H1 (cell line): ENCODE measurements at regions of chrX and their contacts with region 1.

Region 1: DNA sequence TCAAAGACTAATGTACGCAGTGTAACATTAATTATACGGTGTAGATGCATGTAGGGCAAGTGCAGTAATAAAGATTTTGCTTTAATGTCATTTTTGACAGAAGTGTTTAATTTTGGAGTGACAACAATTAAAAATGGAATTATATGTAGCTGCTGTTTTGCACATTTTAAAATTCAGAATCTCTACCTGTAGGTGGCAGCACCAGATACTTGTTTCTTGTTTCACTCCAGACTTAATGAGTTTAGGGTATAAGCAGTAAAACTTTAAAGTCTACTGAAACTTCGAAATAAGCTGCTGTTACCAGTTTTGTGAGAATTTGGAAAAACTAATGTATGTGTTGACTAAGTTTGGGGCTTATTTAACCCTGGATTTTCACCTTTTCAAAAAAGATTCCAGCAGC is 144.9 kb downstream of the POLA1 start:
- DNase-seq: no peak
- H3K4me3 ChIP-seq: no peak overlapping the region
- H3K27ac ChIP-seq: no peak overlapping the region
- H3K4me1 ChIP-seq: peaks cover 0 to 2% (median 0%) of the 10 kb centered on the region in 4 experiments; a peak in 1 of 7 replicates
- H3K27me3 ChIP-seq: no peaks in the 10 kb centered on the region
- CTCF ChIP-seq: peak in 1 of 3 experiments; percentile 25; a peak in 1 of 4 replicates
- EP300 ChIP-seq: no peak
- POLR2A ChIP-seq: no peak
- RAD21 ChIP-seq: peak; percentile 33 to 43

Region 2: DNA sequence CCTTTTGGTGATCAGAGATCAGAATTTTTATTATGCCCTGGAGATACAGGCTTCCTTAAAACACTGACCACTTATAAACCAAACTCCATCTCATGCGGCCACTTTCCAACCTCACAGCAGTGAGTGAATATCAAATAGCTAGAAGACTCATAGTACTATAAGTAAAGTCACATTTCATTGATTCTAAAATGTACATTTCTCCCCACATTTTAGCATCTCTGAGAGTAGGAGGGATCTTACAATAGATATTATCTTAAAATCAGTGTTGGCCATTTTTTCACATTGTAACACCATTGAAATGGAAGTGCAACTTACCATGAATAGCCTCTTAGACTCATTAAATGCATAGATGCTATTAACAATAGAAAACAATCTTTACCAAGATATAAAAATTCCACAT is 208.9 kb before region 1 on chrX:
- CTCF ChIA-PET with region 1: no interaction called
- POLR2A ChIA-PET with region 1: no interaction called
- DNase-seq: no peak
- H3K4me3 ChIP-seq: no peak overlapping the region
- H3K27ac ChIP-seq: no peak overlapping the region
- H3K4me1 ChIP-seq: no peaks in the 10 kb centered on the region
- H3K27me3 ChIP-seq: no peaks in the 10 kb centered on the region
- CTCF ChIP-seq: no peak
- EP300 ChIP-seq: no peak
- POLR2A ChIP-seq: no peak
- RAD21 ChIP-seq: no peak

Region 3: DNA sequence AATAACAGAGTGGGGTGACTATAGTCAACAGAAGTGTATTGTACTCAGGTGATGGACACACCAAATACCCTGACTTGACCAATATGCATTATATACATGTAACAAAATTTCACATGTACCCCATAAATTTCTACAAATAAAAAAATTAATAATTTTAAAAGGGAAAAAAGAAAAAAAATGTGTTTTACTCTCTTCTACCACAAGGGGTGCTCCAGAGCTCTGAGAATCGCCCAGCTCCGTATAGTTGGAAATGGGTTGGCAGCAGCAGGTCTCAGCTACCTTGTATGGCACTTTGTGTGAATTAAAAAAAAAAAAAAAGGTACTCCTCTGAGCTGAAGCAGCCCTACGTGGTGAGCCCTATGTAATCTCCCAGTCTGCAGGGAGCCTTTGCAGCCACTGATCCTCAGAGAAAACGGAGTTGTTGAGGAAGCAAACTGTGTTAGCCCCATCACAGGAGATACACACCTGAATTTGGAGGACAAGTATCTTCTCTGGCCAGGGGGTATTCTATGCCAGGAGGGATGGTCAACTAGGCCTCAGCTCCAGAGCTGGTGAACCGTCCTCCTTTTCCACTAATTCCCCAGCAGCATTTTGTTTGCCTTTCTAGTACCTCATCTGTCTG is 162.1 kb before region 1 on chrX:
- CTCF ChIA-PET with region 1: no interaction called
- POLR2A ChIA-PET with region 1: no interaction called
- DNase-seq: no peak
- H3K4me3 ChIP-seq: no peak overlapping the region
- H3K27ac ChIP-seq: no peak overlapping the region
- H3K4me1 ChIP-seq: peaks cover 0 to 10% (median 3%) of the 10 kb centered on the region in 4 experiments; a peak in 4 of 7 replicates
- H3K27me3 ChIP-seq: no peaks in the 10 kb centered on the region
- CTCF ChIP-seq: peak; percentile 8 to 15 (median 15); a peak in 3 of 4 replicates
- EP300 ChIP-seq: no peak
- POLR2A ChIP-seq: no peak
- RAD21 ChIP-seq: peak; percentile 22 to 32; a peak in 3 of 4 replicates

Region 4: DNA sequence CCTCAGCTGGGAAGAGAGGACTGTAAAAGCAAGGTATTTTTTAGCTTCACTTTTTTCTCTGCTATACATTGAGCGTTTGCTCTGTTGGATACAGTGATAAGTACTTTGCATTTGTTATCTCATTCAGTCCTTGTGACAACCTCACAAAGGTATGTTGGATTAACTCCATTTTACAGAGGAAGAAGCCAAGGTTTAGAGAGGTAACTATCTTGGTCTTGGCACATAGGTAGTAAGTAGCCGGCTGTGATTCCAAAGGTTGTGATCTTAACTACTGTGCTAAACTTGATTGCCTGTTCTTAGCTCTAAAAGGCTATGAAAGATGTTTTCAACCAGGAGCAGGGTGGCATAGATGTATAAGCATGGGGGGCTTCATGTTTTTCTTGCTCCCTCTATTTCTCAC is 10.5 kb before region 1 on chrX:
- CTCF ChIA-PET with region 1: interaction called, 14 read pairs
- POLR2A ChIA-PET with region 1: no interaction called
- DNase-seq: no peak
- H3K4me3 ChIP-seq: no peak overlapping the region
- H3K27ac ChIP-seq: no peak overlapping the region
- H3K4me1 ChIP-seq: no peaks in the 10 kb centered on the region
- H3K27me3 ChIP-seq: no peaks in the 10 kb centered on the region
- CTCF ChIP-seq: no peak
- EP300 ChIP-seq: no peak
- POLR2A ChIP-seq: no peak
- RAD21 ChIP-seq: no peak

Region 5: GRCh38 chrX:25020905-25021449 is 182.3 kb after region 1 on chrX:
- CTCF ChIA-PET with region 1: interaction called, 16 read pairs
- POLR2A ChIA-PET with region 1: no interaction called
- DNase-seq: peak in 1 of 2 experiments; percentile 80
- H3K4me3 ChIP-seq: peak overlapping the region; percentile 24 to 55 (median 30); a peak in 7 of 8 replicates
- H3K27ac ChIP-seq: no peak overlapping the region
- H3K4me1 ChIP-seq: peaks cover 0 to 12% (median 6%) of the 10 kb centered on the region in 4 experiments; a peak in 6 of 7 replicates
- H3K27me3 ChIP-seq: peaks cover 41 to 75% (median 68%) of the 10 kb centered on the region in 4 experiments
- CTCF ChIP-seq: peak in 2 of 3 experiments; percentile 59 to 69; a peak in 3 of 4 replicates
- EP300 ChIP-seq: no peak
- POLR2A ChIP-seq: no peak
- RAD21 ChIP-seq: peak; percentile 62 to 69